KBM-7 (cell line): ENCODE measurements at regions of chr10 and their contacts with region 1.

Region 1: GRCh38 chr10:71371750-71372166 is 25.0 kb upstream of the CDH23 start:
- DNase-seq: peak; percentile 71

Region 2: DNA sequence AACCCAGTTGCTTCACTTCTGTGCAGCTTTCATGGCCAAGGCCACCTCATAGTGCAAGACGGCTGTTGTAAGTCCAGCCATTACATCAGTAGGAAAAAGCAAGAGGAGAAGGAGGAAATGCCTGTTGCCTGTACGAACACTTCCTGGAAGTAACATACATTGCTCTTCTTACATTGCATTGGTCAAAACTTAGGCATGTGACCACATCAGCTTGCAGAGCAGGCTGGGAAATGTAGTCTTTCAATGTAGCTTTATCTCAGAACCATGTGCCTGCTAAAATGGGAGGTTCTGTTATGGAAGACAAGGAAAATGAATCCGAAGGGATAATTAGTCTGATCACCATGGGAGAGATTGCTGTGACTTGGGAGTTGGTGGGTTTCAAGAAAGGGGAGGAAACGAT is 48.4 kb before region 1 on chr10:
- in situ Hi-C with region 1: loop called (anchors 10 kb)
- DNase-seq: no peak

Region 3: GRCh38 chr10:71647526-71648253 is 275.9 kb after region 1 on chr10:
- in situ Hi-C with region 1: no loop called
- DNase-seq: no peak